RWPE1 (cell line): ENCODE measurements at regions of chr21 and their contacts with region 1.

Region 1: GRCh38 chr21:33444499-33444898 is 35.3 kb downstream of the TMEM50B start:
- DNase-seq: no peak
- H3K27ac ChIP-seq: peak overlapping the region; percentile 55
- CTCF ChIP-seq: no peak

Region 2: GRCh38 chr21:33199516-33200217 is 244.8 kb before region 1 on chr21:
- CTCF ChIA-PET with region 1: interaction called, 10 read pairs
- POLR2A ChIA-PET with region 1: no interaction called
- DNase-seq: peak; percentile 85
- H3K27ac ChIP-seq: no peak overlapping the region
- CTCF ChIP-seq: peak; percentile 79

Region 3: GRCh38 chr21:33244082-33244778 is 200.3 kb before region 1 on chr21:
- CTCF ChIA-PET with region 1: no interaction called
- POLR2A ChIA-PET with region 1: no interaction called
- DNase-seq: no peak
- H3K27ac ChIP-seq: no peak overlapping the region
- CTCF ChIP-seq: no peak

Region 4: DNA sequence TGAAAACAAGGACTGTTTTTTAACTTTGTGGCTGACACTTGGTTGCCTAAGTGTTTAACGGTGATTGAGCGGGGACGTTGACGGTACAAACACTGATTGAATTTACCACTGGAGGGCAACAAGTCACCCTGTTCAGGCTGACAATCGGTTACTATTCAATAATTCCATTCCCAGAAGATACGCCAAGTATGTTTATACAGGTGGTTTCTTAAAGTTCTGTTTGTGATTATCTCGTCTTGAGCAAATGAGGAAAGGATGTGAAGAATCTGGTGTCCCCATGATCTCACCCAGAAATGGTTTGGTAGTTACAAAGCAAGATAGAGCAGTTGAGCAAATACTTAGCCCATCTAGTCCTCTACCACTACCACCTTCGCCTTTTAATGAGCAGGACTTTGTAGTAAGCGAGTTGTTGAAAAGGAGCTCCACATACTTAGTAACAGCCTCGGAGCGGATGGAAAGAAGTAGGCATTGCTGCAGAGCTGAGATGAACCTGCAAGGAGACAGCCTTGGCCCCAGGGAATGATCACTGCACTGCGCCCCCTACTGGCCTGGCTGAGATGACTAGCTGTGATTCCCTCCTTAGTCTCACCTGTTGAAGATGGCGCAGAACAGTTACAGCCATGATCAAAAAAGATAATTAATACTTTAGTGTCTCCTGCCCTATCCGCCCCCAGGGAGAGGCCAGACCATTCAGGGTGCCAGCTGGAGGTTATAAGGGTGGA is 83.5 kb before region 1 on chr21:
- CTCF ChIA-PET with region 1: interaction called, 20 read pairs
- POLR2A ChIA-PET with region 1: no interaction called
- DNase-seq: peak; percentile 68
- H3K27ac ChIP-seq: peak overlapping the region; percentile 74
- CTCF ChIP-seq: peak; percentile 76